ENCODE measurements at regions of chr15 and their contacts with region 1.

Region 1: GRCh38 chr15:25438601-25439368 is at the start of gene UBE3A:
- DNase-seq: peak; percentile 91
- H3K4me3 Mint-ChIP-seq: peak within 1 kb of the TSS; percentile 89
- H3K27ac Mint-ChIP-seq: peak within 1 kb of the TSS; percentile 87
- H3K4me1 Mint-ChIP-seq: peaks cover 23% of the 10 kb centered on the region
- H3K27me3 Mint-ChIP-seq: no peaks in the 10 kb centered on the region
- total RNA-seq, gene UBE3A: 89.0 to 102 TPM

Region 2: GRCh38 chr15:24772686-24773373 is 666.0 kb before region 1 on chr15:
- CTCF ChIA-PET with region 1: no interaction called
- POLR2A ChIA-PET with region 1: no interaction called
- intact Hi-C with region 1: loop called (anchors 5 kb)
- DNase-seq: peak; percentile 78
- H3K4me3 Mint-ChIP-seq: peak overlapping the region; percentile 76
- H3K27ac Mint-ChIP-seq: peak overlapping the region; percentile 68
- H3K4me1 Mint-ChIP-seq: peaks cover 3% of the 10 kb centered on the region
- H3K27me3 Mint-ChIP-seq: peaks cover 1% of the 10 kb centered on the region

Region 3: GRCh38 chr15:25329696-25330095 is 109.1 kb before region 1 on chr15:
- CTCF ChIA-PET with region 1: no interaction called
- POLR2A ChIA-PET with region 1: no interaction called
- intact Hi-C with region 1: loop called (anchors 5 kb)
- DNase-seq: no peak
- H3K4me3 Mint-ChIP-seq: no peak overlapping the region
- H3K27ac Mint-ChIP-seq: no peak overlapping the region
- H3K4me1 Mint-ChIP-seq: peaks cover 2% of the 10 kb centered on the region
- H3K27me3 Mint-ChIP-seq: no peaks in the 10 kb centered on the region

Region 4: GRCh38 chr15:25416693-25417092 is 22.1 kb before region 1 on chr15:
- CTCF ChIA-PET with region 1: interaction called, 3 read pairs
- POLR2A ChIA-PET with region 1: no interaction called
- intact Hi-C with region 1: loop called (anchors 2 kb)
- DNase-seq: no peak
- H3K4me3 Mint-ChIP-seq: no peak overlapping the region
- H3K27ac Mint-ChIP-seq: peak overlapping the region; percentile 30
- H3K4me1 Mint-ChIP-seq: peaks cover 69% of the 10 kb centered on the region
- H3K27me3 Mint-ChIP-seq: no peaks in the 10 kb centered on the region

Region 5: DNA sequence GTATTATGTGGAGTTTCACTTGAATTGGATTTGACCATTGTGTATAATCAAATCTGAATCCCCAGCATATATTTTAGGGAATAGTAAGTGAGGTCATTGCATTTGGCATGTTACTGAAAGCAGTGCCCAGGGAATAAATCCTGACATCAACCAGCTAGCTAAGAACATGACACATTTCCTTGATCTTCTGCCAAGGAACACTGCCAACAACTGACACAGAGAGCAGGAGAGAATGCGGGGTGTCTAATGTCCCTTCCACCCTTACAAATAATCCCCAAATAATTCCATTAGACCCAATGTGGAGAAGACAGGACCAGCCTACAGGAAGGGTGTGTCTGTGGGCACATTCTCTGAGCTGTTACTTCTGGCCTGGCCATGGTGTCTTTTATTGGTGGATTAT is 30.6 kb after region 1 on chr15:
- CTCF ChIA-PET with region 1: no interaction called
- POLR2A ChIA-PET with region 1: no interaction called
- intact Hi-C with region 1: no loop called
- DNase-seq: no peak
- H3K4me3 Mint-ChIP-seq: no peak overlapping the region
- H3K27ac Mint-ChIP-seq: no peak overlapping the region
- H3K4me1 Mint-ChIP-seq: no peaks in the 10 kb centered on the region
- H3K27me3 Mint-ChIP-seq: peaks cover 8% of the 10 kb centered on the region

Region 6: GRCh38 chr15:25863111-25863967 is 424.6 kb after region 1 on chr15 and contains the start of gene ATP10A:
- CTCF ChIA-PET with region 1: no interaction called
- POLR2A ChIA-PET with region 1: no interaction called
- intact Hi-C with region 1: loop called (anchors 5 kb)
- DNase-seq: peak; percentile 66
- H3K4me3 Mint-ChIP-seq: peak within 1 kb of the TSS; percentile 90
- H3K27ac Mint-ChIP-seq: peak within 1 kb of the TSS; percentile 86
- H3K4me1 Mint-ChIP-seq: peaks cover 34% of the 10 kb centered on the region
- H3K27me3 Mint-ChIP-seq: no peaks in the 10 kb centered on the region
- total RNA-seq, gene ATP10A: 15.9 to 17.2 TPM